CD8-positive, alpha-beta T cell (primary cell): ENCODE measurements at regions of chr1 and their contacts with region 1.

Region 1: DNA sequence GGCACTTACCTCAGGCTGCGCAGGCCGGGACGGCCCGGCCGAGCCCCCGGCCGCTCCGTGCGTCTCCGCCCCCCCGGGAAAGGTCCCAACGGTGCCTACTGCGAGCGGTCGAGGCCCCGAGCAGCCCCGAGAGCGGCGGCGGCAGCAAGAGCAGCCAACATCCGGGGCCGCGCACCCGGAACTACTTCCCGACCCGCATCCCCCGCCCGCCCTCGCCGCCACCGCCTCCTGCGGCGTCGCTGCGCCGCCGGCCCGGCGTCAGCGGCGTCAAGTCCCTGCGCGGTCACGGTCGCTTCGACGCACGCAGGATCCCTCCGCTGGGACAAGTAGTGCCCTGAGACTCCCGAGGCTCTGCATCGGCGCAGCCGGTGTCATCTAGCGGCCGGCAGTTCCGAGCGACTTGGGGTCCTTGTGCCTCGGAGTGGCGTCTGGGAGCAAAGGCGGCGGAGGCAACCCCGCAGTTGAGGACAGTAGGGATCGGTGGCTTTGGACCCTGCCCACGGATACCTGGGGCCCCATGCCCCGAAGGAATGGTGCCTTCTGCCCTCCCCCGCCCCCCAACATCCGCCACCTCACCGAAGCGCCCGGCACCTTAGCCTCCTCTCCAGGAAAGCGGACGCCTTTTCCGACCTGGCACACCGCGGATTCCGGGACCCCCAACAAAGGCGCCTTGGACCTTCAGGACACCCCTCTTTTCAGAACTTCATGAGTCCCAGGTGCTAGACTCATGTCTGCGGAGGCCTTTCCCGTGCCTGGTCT is at the start of gene FOXJ3:
- DNase-seq: peak; percentile 82 to 99 (median 93)
- ATAC-seq: peak; percentile 92
- H3K4me3 ChIP-seq: peak within 1 kb of the TSS; percentile 82 to 85
- H3K4me3 Mint-ChIP-seq: peak within 1 kb of the TSS; percentile 98
- H3K27ac ChIP-seq: peak within 1 kb of the TSS; percentile 64 to 78
- H3K27ac Mint-ChIP-seq: peak within 1 kb of the TSS; percentile 91
- H3K4me1 ChIP-seq: peaks cover 32% of the 10 kb centered on the region
- H3K4me1 Mint-ChIP-seq: peaks cover 56% of the 10 kb centered on the region
- H3K27me3 ChIP-seq: no peaks in the 10 kb centered on the region
- H3K27me3 Mint-ChIP-seq: no peaks in the 10 kb centered on the region
- CTCF ChIP-seq: no peak
- total RNA-seq, gene FOXJ3: 80.6 to 89.3 TPM

Region 2: GRCh38 chr1:42173155-42173933 is 161.9 kb before region 1 on chr1:
- CTCF ChIA-PET with region 1: interaction called, 6 read pairs
- POLR2A ChIA-PET with region 1: no interaction called
- intact Hi-C with region 1: loop called (anchors 1 kb)
- DNase-seq: peak; percentile 38 to 84 (median 66)
- ATAC-seq: peak; percentile 92
- H3K4me3 ChIP-seq: no peak overlapping the region
- H3K4me3 Mint-ChIP-seq: no peak overlapping the region
- H3K27ac ChIP-seq: no peak overlapping the region
- H3K27ac Mint-ChIP-seq: no peak overlapping the region
- H3K4me1 ChIP-seq: peaks cover 4% of the 10 kb centered on the region
- H3K4me1 Mint-ChIP-seq: no peaks in the 10 kb centered on the region
- H3K27me3 ChIP-seq: no peaks in the 10 kb centered on the region
- H3K27me3 Mint-ChIP-seq: no peaks in the 10 kb centered on the region
- CTCF ChIP-seq: peak; percentile 97

Region 3: GRCh38 chr1:42319128-42319851 is 15.9 kb before region 1 on chr1:
- CTCF ChIA-PET with region 1: interaction called, 5 read pairs
- POLR2A ChIA-PET with region 1: interaction called, 17 read pairs
- intact Hi-C with region 1: loop called (anchors 1 to 2 kb)
- DNase-seq: peak in 6 of 9 experiments; percentile 14 to 44 (median 25)
- ATAC-seq: peak; percentile 35
- H3K4me3 ChIP-seq: peak overlapping the region in 1 of 2 experiments; percentile 22
- H3K4me3 Mint-ChIP-seq: peak overlapping the region; percentile 78
- H3K27ac ChIP-seq: peak overlapping the region; percentile 28 to 65
- H3K27ac Mint-ChIP-seq: peak overlapping the region; percentile 93
- H3K4me1 ChIP-seq: peaks cover 84% of the 10 kb centered on the region
- H3K4me1 Mint-ChIP-seq: peaks cover 89% of the 10 kb centered on the region
- H3K27me3 ChIP-seq: no peaks in the 10 kb centered on the region
- H3K27me3 Mint-ChIP-seq: no peaks in the 10 kb centered on the region
- CTCF ChIP-seq: no peak

Region 4: DNA sequence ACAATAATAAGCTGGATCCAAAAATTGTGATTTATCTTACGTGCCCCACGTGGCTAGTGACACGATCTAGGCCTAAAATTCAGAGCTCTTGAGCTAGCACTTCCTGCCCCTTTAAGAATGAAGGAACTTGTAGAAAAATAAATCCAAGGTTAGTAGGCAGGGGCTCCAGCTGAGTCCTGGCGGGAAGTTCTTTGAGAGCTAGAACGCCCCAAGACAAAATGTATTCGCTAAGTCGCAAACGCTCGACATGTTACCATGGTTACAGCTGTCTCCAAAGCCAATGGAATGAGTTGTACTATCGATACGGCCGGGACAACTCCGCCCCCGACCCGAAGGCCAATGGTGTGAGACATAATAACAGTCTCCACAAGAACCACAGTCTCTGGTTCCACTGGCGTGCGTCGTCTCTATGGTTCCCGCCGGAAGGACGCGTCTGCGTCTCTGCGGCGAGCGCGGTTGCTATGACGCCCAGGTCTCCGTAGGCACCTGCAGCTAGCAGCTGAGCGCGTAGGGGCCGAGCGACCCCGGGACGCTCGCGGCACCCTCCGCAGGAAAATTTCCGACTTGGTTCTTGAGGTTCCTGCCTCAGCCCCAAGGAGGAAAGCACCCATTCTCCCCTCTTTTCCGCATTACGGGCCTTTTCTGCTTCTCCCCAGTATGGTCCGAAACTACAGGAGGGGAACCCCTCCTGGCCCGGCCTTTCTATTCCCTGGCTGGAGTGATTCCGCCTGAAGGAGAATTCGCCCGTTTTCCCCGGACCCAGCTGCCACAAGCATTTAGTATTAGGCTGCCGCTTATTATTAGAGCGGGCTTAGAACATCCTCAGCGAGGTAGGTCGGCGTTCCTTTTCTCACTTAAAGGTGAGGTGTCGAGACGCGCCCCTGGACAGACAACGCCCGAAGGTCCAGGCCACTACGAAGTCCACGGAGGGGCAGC is 127.9 kb after region 1 on chr1 and contains the start of gene CCDC30:
- CTCF ChIA-PET with region 1: no interaction called
- POLR2A ChIA-PET with region 1: no interaction called
- intact Hi-C with region 1: loop called in 1 of 2 experiments (anchors 1 kb)
- DNase-seq: peak; percentile 92 to 99 (median 94)
- ATAC-seq: peak; percentile 98
- H3K4me3 ChIP-seq: peak within 1 kb of the TSS; percentile 60 to 62
- H3K4me3 Mint-ChIP-seq: peak within 1 kb of the TSS; percentile 84
- H3K27ac ChIP-seq: peak within 1 kb of the TSS; percentile 70 to 83
- H3K27ac Mint-ChIP-seq: peak within 1 kb of the TSS; percentile 93
- H3K4me1 ChIP-seq: peaks cover 23% of the 10 kb centered on the region
- H3K4me1 Mint-ChIP-seq: peaks cover 40% of the 10 kb centered on the region
- H3K27me3 ChIP-seq: no peaks in the 10 kb centered on the region
- H3K27me3 Mint-ChIP-seq: no peaks in the 10 kb centered on the region
- CTCF ChIP-seq: no peak
- total RNA-seq, gene CCDC30: 2.5 to 2.8 TPM

Region 5: GRCh38 chr1:42681741-42682483 is 346.7 kb after region 1 on chr1 and contains the start of gene YBX1:
- CTCF ChIA-PET with region 1: no interaction called
- POLR2A ChIA-PET with region 1: no interaction called
- intact Hi-C with region 1: loop called (anchors 1 to 2 kb)
- DNase-seq: peak; percentile 88 to 98 (median 95)
- ATAC-seq: peak; percentile 89
- H3K4me3 ChIP-seq: peak within 1 kb of the TSS; percentile 81 to 84
- H3K4me3 Mint-ChIP-seq: peak within 1 kb of the TSS; percentile 99
- H3K27ac ChIP-seq: peak within 1 kb of the TSS; percentile 82 to 88
- H3K27ac Mint-ChIP-seq: peak within 1 kb of the TSS; percentile 97
- H3K4me1 ChIP-seq: peaks cover 43% of the 10 kb centered on the region
- H3K4me1 Mint-ChIP-seq: peaks cover 58% of the 10 kb centered on the region
- H3K27me3 ChIP-seq: no peaks in the 10 kb centered on the region
- H3K27me3 Mint-ChIP-seq: no peaks in the 10 kb centered on the region
- CTCF ChIP-seq: no peak
- total RNA-seq, gene YBX1: 440 to 450 TPM

Region 6: GRCh38 chr1:42958488-42959319 is 623.5 kb after region 1 on chr1 and contains the start of gene SLC2A1:
- CTCF ChIA-PET with region 1: no interaction called
- POLR2A ChIA-PET with region 1: no interaction called
- intact Hi-C with region 1: loop called in 1 of 2 experiments (anchors 10 kb)
- DNase-seq: peak; percentile 92 to 98 (median 96)
- ATAC-seq: peak; percentile 90
- H3K4me3 ChIP-seq: peak within 1 kb of the TSS; percentile 79 to 96
- H3K4me3 Mint-ChIP-seq: peak within 1 kb of the TSS; percentile 98
- H3K27ac ChIP-seq: peak within 1 kb of the TSS; percentile 76 to 86
- H3K27ac Mint-ChIP-seq: peak within 1 kb of the TSS; percentile 99
- H3K4me1 ChIP-seq: peaks cover 42% of the 10 kb centered on the region
- H3K4me1 Mint-ChIP-seq: peaks cover 51% of the 10 kb centered on the region
- H3K27me3 ChIP-seq: no peaks in the 10 kb centered on the region
- H3K27me3 Mint-ChIP-seq: no peaks in the 10 kb centered on the region
- CTCF ChIP-seq: no peak
- total RNA-seq, gene SLC2A1: 85.0 to 97.2 TPM